ENCODE measurements at regions of chr14 and their contacts with region 1.

Region 1: GRCh38 chr14:63852817-63853731 is at the start of gene SYNE2:
- DNase-seq: peak; percentile 82 to 92 (median 92)
- ATAC-seq: peak; percentile 95
- H3K4me3 ChIP-seq: peak within 1 kb of the TSS; percentile 85
- H3K27ac ChIP-seq: peak within 1 kb of the TSS; percentile 83
- H3K4me1 ChIP-seq: peaks cover 3% of the 10 kb centered on the region
- H3K27me3 ChIP-seq: no peaks in the 10 kb centered on the region
- total RNA-seq, gene SYNE2: 83.7 to 229 (median 157) TPM

Region 2: DNA sequence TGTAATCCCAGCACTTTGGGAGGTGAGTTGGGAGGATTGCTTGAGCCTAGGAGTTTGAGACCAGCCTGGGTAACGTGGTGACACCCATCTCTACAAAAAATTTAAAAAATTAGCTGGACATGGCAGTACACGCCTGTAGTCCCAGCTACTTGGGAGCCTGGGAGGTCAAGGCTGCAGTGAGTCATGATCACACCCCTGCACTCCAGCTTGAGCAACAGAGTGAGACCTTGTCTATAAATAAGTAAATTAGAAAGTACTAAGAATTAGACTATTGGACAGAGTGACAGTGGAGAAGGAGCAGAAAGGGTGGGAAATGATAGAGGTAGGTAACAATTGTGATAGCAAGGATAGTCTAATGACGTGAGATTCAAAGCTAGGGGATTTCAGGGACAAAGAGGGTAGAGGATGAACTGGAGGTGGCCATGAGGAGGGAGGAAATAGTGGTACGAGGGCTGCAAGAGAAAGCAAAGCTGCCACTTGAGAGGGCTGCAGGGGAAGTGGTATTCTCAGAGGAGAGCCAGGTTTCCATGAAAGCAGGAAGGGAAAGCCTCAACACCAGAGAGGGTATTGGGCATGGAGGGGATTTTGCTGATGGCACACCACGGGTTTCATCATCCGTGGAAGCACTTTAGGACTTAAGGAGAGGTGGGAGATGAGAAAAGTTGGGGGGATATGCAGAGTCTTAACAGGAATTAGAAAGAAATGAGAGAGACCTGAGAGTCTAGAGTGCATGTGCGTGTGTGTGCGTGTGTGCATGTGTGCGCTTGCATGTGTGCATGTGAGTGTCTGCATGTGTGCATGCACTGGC is 85.3 kb after region 1 on chr14:
- intact Hi-C with region 1: loop called in 1 of 4 experiments (anchors 10 kb)
- DNase-seq: no peak
- ATAC-seq: no peak
- H3K4me3 ChIP-seq: no peak overlapping the region
- H3K27ac ChIP-seq: peak overlapping the region; percentile 42
- H3K4me1 ChIP-seq: peaks cover 6% of the 10 kb centered on the region
- H3K27me3 ChIP-seq: no peaks in the 10 kb centered on the region

Region 3: DNA sequence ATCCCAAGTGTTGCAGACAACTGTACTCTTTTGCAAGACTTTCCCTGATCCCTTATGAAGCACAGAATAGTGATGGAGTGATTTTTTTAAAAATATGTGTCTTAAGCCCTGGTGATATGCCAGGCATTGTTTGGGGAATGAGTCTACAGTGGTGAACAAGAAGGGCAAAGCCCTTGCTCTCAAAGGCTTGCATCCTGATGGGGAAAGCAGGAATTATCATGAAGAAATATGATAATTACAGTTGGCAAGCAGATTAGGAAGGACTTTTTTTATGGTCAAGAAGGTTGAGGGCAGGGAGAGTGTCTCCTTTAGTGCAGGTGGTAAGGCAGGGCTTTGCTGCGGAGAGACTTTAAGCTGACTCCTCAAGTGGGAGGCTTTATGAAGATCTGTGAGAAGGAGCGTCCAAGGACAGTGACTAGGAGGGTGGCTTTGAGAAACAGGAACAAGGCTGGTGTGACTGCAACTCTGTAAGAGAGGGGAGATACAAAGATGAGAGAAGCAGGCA is 99.9 kb after region 1 on chr14:
- intact Hi-C with region 1: loop called in 1 of 4 experiments (anchors 10 kb)
- DNase-seq: no peak
- ATAC-seq: peak in 1 of 2 donors; percentile 72
- H3K4me3 ChIP-seq: no peak overlapping the region
- H3K27ac ChIP-seq: peak overlapping the region; percentile 36
- H3K4me1 ChIP-seq: peaks cover 8% of the 10 kb centered on the region
- H3K27me3 ChIP-seq: no peaks in the 10 kb centered on the region

Region 4: DNA sequence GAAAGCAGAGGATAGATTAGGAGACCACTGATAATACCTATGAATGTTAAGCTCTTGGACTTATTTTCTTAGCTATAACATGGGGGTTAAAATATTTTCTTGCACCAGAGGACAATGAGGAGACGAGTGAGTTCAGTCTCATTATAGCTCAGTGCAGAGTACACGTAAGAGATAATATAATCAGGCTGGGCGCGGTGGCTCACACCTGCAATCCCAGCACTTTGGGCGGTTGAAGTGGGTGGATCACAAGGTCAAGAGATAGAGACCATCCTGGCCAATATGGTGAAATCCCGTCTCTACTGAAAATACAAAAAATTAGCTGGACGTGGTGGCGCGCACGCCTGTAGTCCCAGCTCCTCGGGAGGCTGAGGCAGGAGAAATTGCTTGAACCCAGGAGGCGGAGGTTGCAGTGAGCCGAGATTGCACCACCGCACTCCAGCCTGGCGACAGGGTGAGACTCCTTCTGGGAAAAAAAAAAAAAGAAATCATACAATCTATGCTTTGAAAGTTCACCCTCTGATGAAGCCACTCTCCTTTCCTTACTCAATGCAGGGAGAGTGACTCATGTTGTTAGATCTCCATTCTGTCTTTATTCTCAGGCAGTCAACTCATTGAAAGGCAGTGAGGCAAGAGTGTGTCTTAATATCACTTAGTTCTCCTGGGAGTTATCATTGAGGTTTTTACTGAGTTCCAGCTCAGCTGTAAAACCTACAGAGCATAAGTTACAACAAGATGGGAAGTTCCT is 133.9 kb after region 1 on chr14:
- intact Hi-C with region 1: loop called in 2 of 4 experiments (anchors 10 kb)
- DNase-seq: no peak
- ATAC-seq: peak; percentile 36 to 40
- H3K4me3 ChIP-seq: no peak overlapping the region
- H3K27ac ChIP-seq: no peak overlapping the region
- H3K4me1 ChIP-seq: no peaks in the 10 kb centered on the region
- H3K27me3 ChIP-seq: no peaks in the 10 kb centered on the region

Region 5: DNA sequence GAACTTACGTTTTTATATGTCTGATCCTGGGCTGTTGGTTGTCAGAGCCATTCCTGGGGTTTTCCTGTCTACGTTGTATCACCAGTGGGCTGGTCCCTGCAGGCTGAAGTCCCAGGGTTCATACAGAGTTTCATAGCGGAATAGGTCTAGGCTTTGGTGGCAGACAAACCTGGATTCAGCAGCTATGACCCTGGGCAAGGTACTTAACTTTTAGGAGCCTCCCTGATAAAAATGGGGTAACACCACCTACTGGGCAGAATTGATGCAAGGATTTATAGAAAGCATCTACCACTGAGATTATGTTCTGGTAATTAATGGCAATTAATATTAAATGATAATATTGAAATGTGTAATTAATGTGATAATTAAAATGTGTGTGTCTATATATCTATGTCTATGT is 140.9 kb after region 1 on chr14:
- intact Hi-C with region 1: loop called in 2 of 4 experiments (anchors 10 kb)
- DNase-seq: no peak
- ATAC-seq: no peak
- H3K4me3 ChIP-seq: no peak overlapping the region
- H3K27ac ChIP-seq: no peak overlapping the region
- H3K4me1 ChIP-seq: no peaks in the 10 kb centered on the region
- H3K27me3 ChIP-seq: no peaks in the 10 kb centered on the region

Region 6: DNA sequence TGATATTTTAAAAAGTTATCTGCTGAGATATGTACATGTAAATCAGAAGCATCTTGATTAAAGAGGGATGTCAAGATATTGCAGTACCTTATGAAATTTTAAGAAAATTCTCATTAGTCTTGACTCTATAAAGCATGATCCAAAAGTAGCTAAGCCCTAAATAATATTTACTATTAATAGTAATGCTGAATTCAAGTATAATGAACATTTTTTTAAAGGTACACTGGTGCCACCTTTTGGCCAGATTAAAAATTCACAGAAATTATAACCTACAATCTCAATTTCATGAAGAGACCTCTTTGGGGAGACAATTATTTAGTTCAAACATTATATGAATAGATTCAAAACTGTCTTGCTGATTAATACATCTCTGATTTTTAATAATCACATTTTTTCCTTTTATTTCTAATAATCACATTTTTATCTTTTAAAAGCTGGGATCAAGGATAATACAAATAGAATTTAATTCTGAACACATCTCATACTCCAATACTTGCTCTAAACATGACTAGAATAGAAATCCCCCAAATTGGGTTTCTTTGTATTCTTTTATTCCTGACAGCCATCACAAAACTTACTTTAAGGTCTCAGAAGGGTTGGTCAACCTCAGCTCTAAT is 625.7 kb after region 1 on chr14:
- intact Hi-C with region 1: no loop called
- DNase-seq: no peak
- ATAC-seq: no peak
- H3K4me3 ChIP-seq: no peak overlapping the region
- H3K27ac ChIP-seq: no peak overlapping the region
- H3K4me1 ChIP-seq: no peaks in the 10 kb centered on the region
- H3K27me3 ChIP-seq: no peaks in the 10 kb centered on the region

Measured in right cardiac atrium (tissue), 5 donors.